Activated CD4-positive, alpha-beta T cell treated with anti-CD3 and anti-CD28 coated beads for 36 hours (primary cell): ENCODE measurements at regions of chr1 and their contacts with region 1.

Region 1: DNA sequence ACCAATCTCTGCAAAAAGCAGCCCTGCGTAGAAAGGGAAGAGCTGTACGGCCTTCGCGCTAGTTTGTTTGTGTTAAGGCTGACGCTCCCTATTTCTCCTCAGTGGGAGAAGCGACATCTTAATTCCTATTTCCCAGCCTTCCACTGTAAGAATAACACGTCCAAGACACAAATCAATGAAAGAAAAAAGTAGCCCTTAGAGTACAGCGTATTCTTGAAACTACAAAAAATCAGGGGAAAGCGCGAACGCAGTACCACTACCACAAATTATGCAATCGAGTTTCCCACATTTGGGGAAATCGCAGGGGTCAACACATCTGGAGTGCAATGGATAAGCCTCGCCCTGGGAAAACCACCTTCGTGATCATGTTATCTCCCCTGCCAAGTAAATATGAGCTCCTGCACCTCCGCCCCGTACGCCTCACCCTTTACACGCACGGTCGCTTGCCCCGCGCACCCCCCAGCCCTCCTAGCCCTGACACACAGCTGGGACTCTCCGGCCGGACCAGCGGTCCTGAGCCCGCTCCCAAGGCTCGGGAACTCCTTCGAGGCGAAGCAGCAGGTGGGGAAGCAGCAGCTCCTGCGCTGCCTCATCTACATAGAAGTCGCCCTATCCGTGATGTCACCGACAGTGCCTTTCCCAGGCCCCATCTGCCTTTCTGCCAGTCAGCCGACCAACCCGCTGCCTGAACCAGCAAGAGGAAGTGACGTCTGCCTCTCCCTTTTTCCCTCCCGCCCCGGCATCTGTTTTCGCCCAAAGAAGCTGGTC is 94.7 kb downstream of the PPIAL4G start:
- DNase-seq: peak; percentile 94
- ATAC-seq: peak; percentile 88
- H3K4me3 Mint-ChIP-seq: peak overlapping the region; percentile 76
- H3K27ac Mint-ChIP-seq: peak overlapping the region; percentile 99
- H3K4me1 Mint-ChIP-seq: peaks cover 39% of the 10 kb centered on the region
- H3K27me3 Mint-ChIP-seq: no peaks in the 10 kb centered on the region

Region 2: DNA sequence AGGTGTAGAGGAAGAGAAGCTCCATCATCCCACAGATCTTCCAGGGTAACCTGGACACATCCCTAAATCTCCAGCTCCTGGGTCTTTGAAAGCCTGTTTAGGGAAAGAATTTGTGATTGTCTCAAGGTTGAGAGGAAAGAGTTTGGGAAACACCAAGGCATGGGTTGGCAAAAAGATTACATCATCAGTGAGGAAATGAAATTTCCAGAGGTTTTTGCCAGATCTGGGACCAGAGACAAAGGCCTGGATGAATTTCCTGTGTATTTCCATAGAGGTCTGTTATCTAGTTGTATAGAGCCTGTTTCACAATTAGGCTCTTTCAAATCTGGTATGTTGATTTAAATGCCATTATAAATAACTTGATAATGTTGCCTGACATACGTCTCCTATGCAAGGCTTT is 377.9 kb before region 1 on chr1:
- CTCF ChIA-PET with region 1: no interaction called
- POLR2A ChIA-PET with region 1: no interaction called
- intact Hi-C with region 1: no loop called
- DNase-seq: no peak
- ATAC-seq: no peak
- H3K4me3 Mint-ChIP-seq: no peak overlapping the region
- H3K27ac Mint-ChIP-seq: no peak overlapping the region
- H3K4me1 Mint-ChIP-seq: peaks cover 4% of the 10 kb centered on the region
- H3K27me3 Mint-ChIP-seq: peaks cover 29% of the 10 kb centered on the region

Region 3: DNA sequence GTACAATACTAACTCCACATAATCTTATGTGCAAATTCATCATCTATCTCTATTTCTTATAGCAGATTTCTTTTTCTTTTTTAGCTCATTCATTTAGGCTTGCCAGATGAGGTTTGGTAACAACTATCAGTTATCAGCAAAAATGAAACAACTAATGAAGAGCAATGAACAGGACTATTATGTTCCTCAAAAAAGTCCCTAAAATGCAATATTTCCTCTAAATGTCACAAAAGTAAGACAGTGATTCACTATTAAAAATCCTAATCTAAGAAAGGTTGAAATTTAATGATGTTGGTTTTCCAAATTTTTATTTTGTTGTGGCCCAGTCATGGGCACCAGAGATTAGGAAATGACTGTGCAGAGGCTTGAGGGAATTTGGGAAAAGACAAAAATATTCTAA is 40.7 kb before region 1 on chr1:
- CTCF ChIA-PET with region 1: no interaction called
- POLR2A ChIA-PET with region 1: no interaction called
- intact Hi-C with region 1: no loop called
- DNase-seq: no peak
- ATAC-seq: no peak
- H3K4me3 Mint-ChIP-seq: no peak overlapping the region
- H3K27ac Mint-ChIP-seq: no peak overlapping the region
- H3K4me1 Mint-ChIP-seq: peaks cover 2% of the 10 kb centered on the region
- H3K27me3 Mint-ChIP-seq: peaks cover 14% of the 10 kb centered on the region

Region 4: DNA sequence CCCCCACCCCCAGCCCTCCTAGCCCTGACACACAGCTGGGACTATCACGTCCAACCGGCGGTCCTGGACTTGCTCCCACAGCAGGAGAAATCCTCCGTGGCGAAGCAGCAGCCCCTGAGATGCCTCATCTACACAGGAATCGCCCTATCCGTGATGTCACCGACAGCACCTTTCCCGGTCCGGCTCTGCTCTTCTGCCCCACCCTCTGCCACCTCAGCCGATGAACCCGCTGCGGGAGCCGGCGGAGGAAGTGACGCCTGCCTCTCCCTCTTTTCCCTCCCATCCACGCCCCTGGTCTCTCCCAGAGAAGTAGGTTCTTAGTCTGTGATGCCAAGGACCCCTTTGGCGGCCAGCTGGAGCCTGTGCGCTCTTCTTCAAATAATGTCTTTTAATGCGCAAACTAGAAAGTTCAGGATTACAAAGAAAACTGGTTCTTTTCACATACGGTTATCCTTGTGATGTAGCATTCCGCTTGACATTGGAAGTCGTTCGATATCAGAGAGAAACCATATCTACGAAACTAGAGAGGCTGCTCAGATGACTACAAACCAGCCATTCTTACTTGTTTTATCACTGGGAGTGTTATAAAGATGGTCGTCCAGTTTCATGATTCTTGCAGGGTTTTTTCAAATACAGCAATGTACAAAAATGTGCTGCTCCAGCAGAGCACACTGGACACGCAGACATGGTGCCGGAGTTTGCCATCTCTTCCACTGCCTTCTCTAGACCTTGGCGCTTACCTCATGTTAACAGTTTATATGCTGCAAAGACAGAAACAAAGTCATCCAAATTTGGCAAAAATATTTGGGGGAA is 25.6 kb before region 1 on chr1:
- CTCF ChIA-PET with region 1: interaction called, 4 read pairs
- POLR2A ChIA-PET with region 1: interaction called, 9 read pairs
- intact Hi-C with region 1: loop called (anchors 1 to 2 kb)
- DNase-seq: peak; percentile 75
- ATAC-seq: peak; percentile 67
- H3K4me3 Mint-ChIP-seq: peak overlapping the region; percentile 74
- H3K27ac Mint-ChIP-seq: peak overlapping the region; percentile 80
- H3K4me1 Mint-ChIP-seq: peaks cover 44% of the 10 kb centered on the region
- H3K27me3 Mint-ChIP-seq: peaks cover 3% of the 10 kb centered on the region

Region 5: DNA sequence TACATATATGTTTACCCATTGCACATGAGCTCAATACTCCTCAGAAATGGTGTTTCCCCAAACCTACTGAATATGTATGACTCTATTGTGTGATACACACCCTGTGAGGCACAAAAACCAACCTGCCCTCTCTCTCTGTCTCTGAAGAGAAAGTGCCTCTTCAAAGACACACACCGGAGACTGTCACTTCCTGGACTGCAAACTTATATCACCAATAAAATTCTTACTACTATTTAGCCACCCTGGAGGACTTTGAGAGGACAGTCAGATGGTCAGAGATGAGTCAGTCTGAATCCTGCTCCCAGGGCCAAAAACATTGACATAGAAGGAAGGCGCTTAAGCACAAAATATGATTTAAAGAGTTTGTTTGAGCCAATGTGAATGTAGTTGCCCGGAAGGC is 15.7 kb before region 1 on chr1:
- CTCF ChIA-PET with region 1: interaction called, 7 read pairs
- POLR2A ChIA-PET with region 1: interaction called, 40 read pairs
- intact Hi-C with region 1: loop called (anchors 1 kb)
- DNase-seq: peak; percentile 72
- ATAC-seq: peak; percentile 77
- H3K4me3 Mint-ChIP-seq: peak overlapping the region; percentile 53
- H3K27ac Mint-ChIP-seq: peak overlapping the region; percentile 99
- H3K4me1 Mint-ChIP-seq: peaks cover 48% of the 10 kb centered on the region
- H3K27me3 Mint-ChIP-seq: no peaks in the 10 kb centered on the region